ENCODE measurements at regions of chr17 and their contacts with region 1.

Region 1: DNA sequence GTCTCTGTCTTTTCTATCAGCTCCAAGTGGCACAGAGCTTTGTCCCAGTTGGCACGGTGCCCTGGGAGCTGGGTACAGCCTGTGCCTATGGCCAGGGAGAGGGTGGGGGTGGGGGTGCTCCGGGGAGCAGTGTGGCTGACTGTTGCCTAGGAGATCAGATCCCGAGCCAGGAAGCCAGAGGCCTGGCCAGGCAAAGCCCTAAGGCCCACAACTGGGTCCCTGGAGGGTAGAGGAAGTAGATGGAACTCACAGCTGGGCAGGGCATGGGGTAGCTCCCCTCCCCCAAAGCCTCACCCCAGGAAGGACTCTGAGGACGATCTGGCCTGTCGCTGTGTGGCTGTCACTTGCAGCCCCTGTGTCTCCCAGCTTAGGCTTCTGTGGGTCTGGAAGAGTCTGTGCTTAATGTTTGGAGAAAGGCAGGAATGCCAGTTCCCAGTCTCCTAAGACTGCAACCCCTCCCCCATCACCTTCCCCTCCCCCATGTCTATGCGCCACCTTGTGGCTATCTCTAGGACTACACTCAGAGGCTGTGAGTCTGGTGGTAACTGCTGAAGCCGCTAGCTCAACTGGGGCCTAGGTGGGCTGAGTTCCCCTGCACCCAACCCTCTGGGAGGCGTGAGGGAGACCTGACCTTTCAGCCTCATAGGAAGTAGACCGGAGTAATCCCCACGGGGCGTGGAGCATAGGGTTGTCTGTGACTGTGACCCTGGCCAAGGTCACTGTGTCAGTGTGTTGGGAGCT is 12.6 kb downstream of the THRA start:
- DNase-seq: no peak
- H3K4me3 ChIP-seq: no peak overlapping the region
- H3K27me3 ChIP-seq: no peaks in the 10 kb centered on the region
- CTCF ChIP-seq: peak; percentile 93

Region 2: GRCh38 chr17:39939588-39940419 is 135.6 kb before region 1 on chr17:
- CTCF ChIA-PET with region 1: no interaction called
- POLR2A ChIA-PET with region 1: no interaction called
- DNase-seq: peak; percentile 76
- H3K4me3 ChIP-seq: no peak overlapping the region
- H3K27me3 ChIP-seq: no peaks in the 10 kb centered on the region; the same call in 1 of the 2 replicates
- CTCF ChIP-seq: peak; percentile 72

Region 3: GRCh38 chr17:40026816-40027613 is 48.4 kb before region 1 on chr17:
- CTCF ChIA-PET with region 1: interaction called, 16 read pairs
- POLR2A ChIA-PET with region 1: no interaction called
- DNase-seq: no peak
- H3K4me3 ChIP-seq: no peak overlapping the region
- H3K27me3 ChIP-seq: no peaks in the 10 kb centered on the region
- CTCF ChIP-seq: peak; percentile 89

Region 4: GRCh38 chr17:40062329-40063186 is 12.8 kb before region 1 on chr17 and contains the start of gene THRA:
- CTCF ChIA-PET with region 1: interaction called, 70 read pairs
- POLR2A ChIA-PET with region 1: no interaction called
- DNase-seq: no peak
- H3K4me3 ChIP-seq: peak within 1 kb of the TSS; percentile 97
- H3K27me3 ChIP-seq: no peaks in the 10 kb centered on the region
- CTCF ChIP-seq: no peak
- polyA plus RNA-seq, gene THRA: 32.1 and 43.3 TPM in 2 replicates

Region 5: DNA sequence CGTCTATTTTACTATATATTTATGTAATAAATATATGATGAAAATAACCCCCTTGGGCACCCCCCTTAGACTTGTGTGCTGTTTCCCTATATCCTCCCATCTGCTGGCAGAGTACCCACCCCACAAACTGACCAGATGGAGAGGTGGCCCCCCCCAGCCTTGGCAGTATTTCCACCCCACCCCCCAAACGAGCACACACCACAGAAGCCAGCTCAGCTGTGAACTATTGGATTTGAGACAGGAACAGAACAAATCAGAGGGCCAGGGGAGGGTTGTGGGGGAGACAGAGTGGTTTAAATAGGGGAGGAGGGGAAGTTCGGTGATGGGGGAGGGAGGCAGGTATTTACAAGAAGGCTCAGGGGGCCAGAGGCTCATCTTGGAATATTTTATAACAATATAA is 17.2 kb after region 1 on chr17:
- CTCF ChIA-PET with region 1: interaction called, 23 read pairs
- POLR2A ChIA-PET with region 1: no interaction called
- DNase-seq: no peak
- H3K4me3 ChIP-seq: no peak overlapping the region
- H3K27me3 ChIP-seq: no peaks in the 10 kb centered on the region
- CTCF ChIP-seq: no peak

Region 6: DNA sequence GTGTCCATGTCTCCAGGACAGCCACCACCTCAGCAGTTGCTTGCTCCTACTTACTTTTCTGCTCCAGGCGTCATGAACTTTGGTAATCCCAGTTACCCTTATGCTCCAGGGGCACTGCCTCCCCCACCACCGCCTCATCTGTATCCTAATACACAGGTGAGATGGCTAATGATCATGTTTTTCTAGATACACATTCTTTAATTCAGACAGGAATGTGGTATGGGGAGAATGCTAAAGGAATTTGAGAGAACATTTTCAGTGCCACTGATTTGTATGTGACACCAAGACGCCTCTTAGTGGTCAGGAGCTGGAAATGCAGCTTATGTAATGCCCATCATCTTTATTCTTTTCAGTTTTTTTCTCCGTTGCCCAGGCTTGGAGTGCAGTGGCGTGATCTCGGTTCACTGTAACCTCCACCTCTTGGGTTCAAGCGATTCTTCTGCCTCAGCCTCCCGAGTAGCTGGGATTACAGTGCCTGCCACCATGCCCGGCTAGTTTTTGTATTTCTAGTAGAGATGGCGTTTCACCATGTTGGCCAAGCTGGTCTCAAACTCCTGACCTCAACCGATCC is 93.0 kb after region 1 on chr17:
- CTCF ChIA-PET with region 1: interaction called, 12 read pairs
- POLR2A ChIA-PET with region 1: no interaction called
- DNase-seq: no peak
- H3K4me3 ChIP-seq: no peak overlapping the region
- H3K27me3 ChIP-seq: no peaks in the 10 kb centered on the region
- CTCF ChIP-seq: peak; percentile 72

Measured in BJ (cell line).